Ovary (tissue), 10 donors: ENCODE measurements at regions of chr5 and their contacts with region 1.

Region 1: DNA sequence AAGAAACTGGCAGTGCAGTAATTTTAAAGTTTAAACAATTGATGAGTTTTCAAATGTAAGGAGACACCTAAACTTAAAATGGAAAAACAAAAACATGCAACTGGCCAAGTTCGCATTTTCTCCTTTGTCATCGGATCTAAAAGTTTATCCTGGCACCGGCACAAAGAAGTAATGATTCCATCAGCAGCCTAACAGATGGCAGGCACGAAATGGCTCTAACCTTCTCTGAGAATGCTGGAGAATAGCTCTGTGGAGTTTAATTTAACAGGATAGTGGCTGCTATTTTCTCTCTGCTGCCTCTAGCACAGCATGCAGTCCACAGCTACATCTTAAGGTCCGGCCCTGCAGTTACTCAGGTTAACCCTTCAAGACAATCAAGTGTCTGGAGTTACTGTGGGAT is 82.2 kb downstream of the PRELID2 start:
- DNase-seq: no peak
- H3K4me3 ChIP-seq: no peak overlapping the region
- H3K27ac ChIP-seq: no peak overlapping the region
- H3K4me1 ChIP-seq: no peaks in the 10 kb centered on the region
- H3K27me3 ChIP-seq: no peaks in the 10 kb centered on the region
- CTCF ChIP-seq: no peak
- EP300 ChIP-seq: no peak
- POLR2A ChIP-seq: no peak

Region 2: GRCh38 chr5:145531038-145531734 is 221.8 kb before region 1 on chr5:
- intact Hi-C with region 1: loop called in 1 of 4 experiments (anchors 5 kb)
- DNase-seq: peak; percentile 46 to 68 (median 61)
- H3K4me3 ChIP-seq: no peak overlapping the region
- H3K27ac ChIP-seq: no peak overlapping the region
- H3K4me1 ChIP-seq: peaks cover 2% of the 10 kb centered on the region
- H3K27me3 ChIP-seq: no peaks in the 10 kb centered on the region
- CTCF ChIP-seq: no peak
- EP300 ChIP-seq: no peak
- POLR2A ChIP-seq: no peak

Region 3: DNA sequence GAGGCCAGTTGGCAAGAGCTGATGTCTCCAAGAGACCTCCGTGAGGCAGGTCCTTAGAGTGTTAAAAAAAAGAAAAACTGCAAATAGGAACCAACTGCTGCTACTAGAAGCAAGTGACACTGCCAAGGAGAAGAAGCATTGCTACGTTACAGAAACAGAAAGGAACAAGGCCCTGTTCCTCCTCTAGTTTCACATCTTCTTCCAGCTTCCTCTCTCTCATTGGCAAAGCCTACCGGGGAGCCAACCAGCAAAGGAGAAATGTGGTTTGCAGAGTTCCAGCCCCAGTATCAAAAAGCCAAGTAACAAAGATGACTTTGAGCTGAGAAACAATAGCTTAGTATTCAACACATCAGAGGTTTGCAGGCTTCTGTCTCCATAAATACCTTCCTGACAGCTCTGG is 63.7 kb before region 1 on chr5:
- intact Hi-C with region 1: no loop called
- DNase-seq: no peak
- H3K4me3 ChIP-seq: no peak overlapping the region
- H3K27ac ChIP-seq: no peak overlapping the region
- H3K4me1 ChIP-seq: no peaks in the 10 kb centered on the region
- H3K27me3 ChIP-seq: no peaks in the 10 kb centered on the region
- CTCF ChIP-seq: no peak
- EP300 ChIP-seq: no peak
- POLR2A ChIP-seq: no peak

Region 4: GRCh38 chr5:146667633-146668272 is 914.8 kb after region 1 on chr5:
- intact Hi-C with region 1: no loop called
- DNase-seq: no peak
- H3K4me3 ChIP-seq: no peak overlapping the region
- H3K27ac ChIP-seq: no peak overlapping the region
- H3K4me1 ChIP-seq: no peaks in the 10 kb centered on the region
- H3K27me3 ChIP-seq: no peaks in the 10 kb centered on the region
- CTCF ChIP-seq: no peak
- EP300 ChIP-seq: no peak
- POLR2A ChIP-seq: no peak